ENCODE measurements at regions of chr1 and their contacts with region 1.

Region 1: DNA sequence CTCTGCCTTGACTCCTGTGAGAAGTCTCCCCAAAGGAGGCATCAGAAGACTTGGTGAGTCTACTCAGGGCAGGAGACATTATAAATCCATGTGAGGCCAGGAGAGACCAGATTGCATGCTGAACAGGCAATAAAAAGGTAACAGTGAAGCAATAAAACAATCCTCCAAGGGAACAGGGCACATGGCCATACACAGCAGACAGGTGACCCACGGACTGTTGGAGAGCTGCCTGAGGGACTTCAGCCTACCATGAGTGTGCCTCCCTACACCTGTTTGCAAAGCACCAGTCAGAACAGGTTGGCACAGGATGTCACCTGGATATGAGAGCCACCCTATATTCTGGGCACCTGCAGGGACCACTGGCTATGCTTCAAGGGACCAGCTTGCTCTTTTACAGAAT is 67.6 kb downstream of the MAB21L3 start:
- DNase-seq: peak; percentile 91
- H3K4me3 ChIP-seq: no peak overlapping the region
- H3K27ac ChIP-seq: peak overlapping the region; percentile 73
- H3K4me1 ChIP-seq: no peaks in the 10 kb centered on the region
- H3K27me3 ChIP-seq: no peaks in the 10 kb centered on the region
- CTCF ChIP-seq: no peak

Region 2: GRCh38 chr1:116325922-116326321 is 147.1 kb after region 1 on chr1:
- intact Hi-C with region 1: loop called (anchors 10 kb)
- DNase-seq: no peak
- H3K4me3 ChIP-seq: no peak overlapping the region
- H3K27ac ChIP-seq: no peak overlapping the region
- H3K4me1 ChIP-seq: peaks cover 13% of the 10 kb centered on the region
- H3K27me3 ChIP-seq: no peaks in the 10 kb centered on the region
- CTCF ChIP-seq: no peak